ENCODE measurements at regions of chr3 and their contacts with region 1.

Region 1: DNA sequence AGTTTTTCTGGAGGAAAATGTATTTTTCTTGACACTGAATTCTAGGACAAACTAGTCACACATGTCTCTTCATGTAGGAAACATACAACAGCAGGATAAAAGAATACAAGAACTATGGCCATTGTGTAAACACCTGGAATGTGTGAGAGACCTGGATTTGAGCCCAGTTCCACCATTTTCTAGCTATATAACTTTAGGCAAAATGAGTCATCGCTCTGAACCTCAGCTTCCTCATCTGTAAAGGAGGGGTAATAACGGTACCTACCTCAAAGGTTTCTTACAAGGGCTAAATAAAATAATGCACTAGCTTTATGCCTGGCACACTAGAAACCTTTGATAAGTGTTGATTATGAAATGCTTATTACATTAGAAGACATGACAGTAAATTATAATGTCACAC is 57.8 kb downstream of the RIOX2 start:
- DNase-seq: peak; percentile 41 to 91
- H3K4me3 ChIP-seq: no peak overlapping the region
- H3K27ac ChIP-seq: no peak overlapping the region
- H3K4me1 ChIP-seq: peaks cover 26% of the 10 kb centered on the region
- H3K27me3 ChIP-seq: no peaks in the 10 kb centered on the region
- CTCF ChIP-seq: no peak

Region 2: GRCh38 chr3:97871801-97872524 is 42.4 kb before region 1 on chr3:
- CTCF ChIA-PET with region 1: no interaction called
- POLR2A ChIA-PET with region 1: no interaction called
- intact Hi-C with region 1: loop called (anchors 1 kb)
- DNase-seq: peak; percentile 53 to 90
- H3K4me3 ChIP-seq: no peak overlapping the region
- H3K27ac ChIP-seq: 0 out of 2 replicates have a peak overlapping the region, but pooled peaks have one; percentile 2
- H3K4me1 ChIP-seq: no peaks in the 10 kb centered on the region
- H3K27me3 ChIP-seq: no peaks in the 10 kb centered on the region
- CTCF ChIP-seq: no peak

Measured in PC-9 (cell line).